ENCODE measurements at regions of chr1 and their contacts with region 1.

Region 1: GRCh38 chr1:167507719-167508118 is 10.6 kb downstream of the CD247 start:
- DNase-seq: no peak
- ATAC-seq: no peak

Region 2: DNA sequence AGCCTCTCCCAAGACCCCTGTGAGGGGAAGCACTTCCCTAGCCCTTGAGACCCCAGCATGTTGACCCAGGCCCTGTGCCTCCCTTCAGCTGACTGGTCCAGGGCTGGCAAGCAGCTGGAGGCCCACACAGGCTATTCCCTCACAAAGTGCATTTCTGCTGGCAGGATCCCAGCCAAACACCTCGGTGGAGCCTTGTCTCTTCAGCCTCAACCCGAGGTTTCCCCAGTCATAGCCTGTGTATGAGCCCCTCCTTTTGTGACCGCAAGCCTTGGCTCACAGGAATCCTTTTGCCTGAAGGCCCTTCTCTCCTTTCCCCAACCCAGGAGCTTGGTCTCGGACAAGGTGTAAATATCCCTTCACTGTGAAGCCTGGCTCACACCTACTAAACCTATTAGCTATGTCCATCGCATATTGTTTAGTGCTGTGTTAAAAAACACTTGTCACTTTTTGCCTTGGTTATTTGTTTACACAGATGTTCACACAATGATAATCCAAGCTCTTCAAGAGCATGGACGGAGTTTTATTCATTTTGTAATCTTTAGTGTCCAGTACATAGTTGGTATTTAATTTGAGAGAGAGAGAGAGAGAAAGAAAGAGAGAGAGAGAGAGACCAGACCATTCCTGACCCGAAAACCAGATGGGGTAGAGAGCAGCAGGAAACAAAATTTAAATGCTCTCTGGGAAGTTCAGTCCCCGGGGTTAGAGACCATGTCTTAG is 19.1 kb after region 1 on chr1:
- intact Hi-C with region 1: loop called (anchors 2 kb)
- DNase-seq: no peak
- ATAC-seq: no peak

Region 3: DNA sequence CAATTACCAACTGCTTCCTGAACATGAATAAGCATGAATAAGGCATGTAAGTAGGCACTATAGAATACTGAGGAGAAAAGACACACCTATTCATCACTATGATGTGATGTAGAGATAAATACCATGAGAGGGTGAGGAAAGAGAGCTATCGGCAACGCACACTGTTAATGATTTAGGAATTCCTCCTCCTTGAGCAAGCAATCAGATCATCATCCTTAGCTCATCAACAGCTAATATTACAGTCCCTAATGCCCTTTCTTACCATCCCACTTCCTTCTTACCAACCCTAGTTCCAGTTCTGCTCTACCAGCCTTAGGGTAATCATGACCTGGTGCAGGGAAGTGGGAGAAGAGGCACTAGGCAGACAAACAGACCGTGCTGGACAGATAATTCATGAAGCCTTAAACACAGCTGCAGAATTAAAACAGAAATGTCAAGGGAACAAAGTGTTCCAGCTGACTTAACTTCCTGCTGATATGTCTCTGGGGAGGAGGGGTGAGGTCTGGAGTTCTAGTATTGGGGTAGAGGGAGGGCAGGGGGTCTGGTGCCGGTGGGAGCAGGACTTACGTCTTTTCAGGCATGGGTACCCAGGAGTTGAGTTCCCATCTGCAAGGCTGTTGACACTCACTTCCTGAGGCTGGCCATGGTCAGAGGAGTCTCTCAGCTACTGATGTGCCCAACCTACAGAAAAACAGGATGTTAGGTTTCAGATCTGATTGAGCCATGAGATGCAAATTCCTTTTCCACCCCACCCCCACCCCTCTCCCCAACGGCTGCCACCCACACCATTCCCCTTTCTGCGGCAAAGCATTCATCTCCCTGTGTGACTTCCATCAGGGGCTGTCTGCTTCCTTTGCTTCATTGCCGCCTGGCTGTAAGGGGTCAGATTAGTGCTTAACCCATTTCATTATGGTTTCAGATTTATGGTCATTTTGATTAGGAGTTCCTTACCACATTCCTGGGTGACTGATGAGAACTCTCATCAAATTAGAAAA is 109.7 kb after region 1 on chr1:
- intact Hi-C with region 1: no loop called
- DNase-seq: no peak
- ATAC-seq: peak; percentile 85

Measured in Right ventricle myocardium inferior (tissue), 1 donor.